ENCODE measurements at regions of chr5 and their contacts with region 1.

Region 1: GRCh38 chr5:59724482-59725391 is 168.8 kb downstream of the PDE4D start:
- DNase-seq: peak; percentile 59
- ATAC-seq: peak; percentile 64
- H3K4me3 ChIP-seq: no peak overlapping the region
- H3K4me3 Mint-ChIP-seq: no peak overlapping the region
- H3K27ac ChIP-seq: no peak overlapping the region
- H3K27ac Mint-ChIP-seq: no peak overlapping the region
- H3K4me1 ChIP-seq: no peaks in the 10 kb centered on the region
- H3K4me1 Mint-ChIP-seq: peaks cover 19% of the 10 kb centered on the region
- H3K27me3 ChIP-seq: no peaks in the 10 kb centered on the region
- H3K27me3 Mint-ChIP-seq: no peaks in the 10 kb centered on the region
- CTCF ChIP-seq: peak; percentile 79

Region 2: GRCh38 chr5:59390074-59390659 is 334.6 kb before region 1 on chr5:
- CTCF ChIA-PET with region 1: interaction called, 5 read pairs
- POLR2A ChIA-PET with region 1: no interaction called
- intact Hi-C with region 1: loop called (anchors 5 kb)
- DNase-seq: peak; percentile 53
- ATAC-seq: no peak
- H3K4me3 ChIP-seq: no peak overlapping the region
- H3K4me3 Mint-ChIP-seq: no peak overlapping the region
- H3K27ac ChIP-seq: no peak overlapping the region
- H3K27ac Mint-ChIP-seq: no peak overlapping the region
- H3K4me1 ChIP-seq: no peaks in the 10 kb centered on the region
- H3K4me1 Mint-ChIP-seq: peaks cover 21% of the 10 kb centered on the region
- H3K27me3 ChIP-seq: no peaks in the 10 kb centered on the region
- H3K27me3 Mint-ChIP-seq: no peaks in the 10 kb centered on the region
- CTCF ChIP-seq: peak; percentile 95

Region 3: DNA sequence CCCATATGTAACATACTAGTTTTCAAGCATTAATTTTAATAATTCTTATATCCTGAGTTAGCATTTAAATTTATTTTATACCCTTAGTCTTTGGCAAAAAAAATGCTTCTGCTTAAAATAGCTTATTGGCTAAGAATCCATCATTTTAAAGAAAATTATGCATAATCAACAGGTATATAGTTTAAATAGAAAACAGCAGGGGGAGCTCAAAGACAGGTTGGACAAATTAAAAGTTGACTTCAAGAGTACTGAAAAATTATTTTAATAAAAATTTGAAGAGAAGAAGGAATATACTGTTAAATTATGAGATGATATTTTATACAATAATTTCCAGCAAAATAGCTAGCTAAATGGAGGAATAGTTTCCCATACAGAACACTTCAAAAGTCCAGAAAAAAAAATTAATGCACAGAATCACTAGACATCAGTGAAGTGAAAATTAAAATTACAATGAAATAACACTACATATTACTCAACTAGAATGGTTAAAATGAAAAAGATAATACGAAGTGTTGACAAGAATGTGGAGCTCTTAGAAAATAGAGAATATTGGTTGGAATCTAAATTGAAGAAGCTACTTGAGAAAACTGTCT is 218.4 kb before region 1 on chr5:
- CTCF ChIA-PET with region 1: interaction called, 19 read pairs
- POLR2A ChIA-PET with region 1: no interaction called
- intact Hi-C with region 1: loop called (anchors 1 kb)
- DNase-seq: peak; percentile 57
- ATAC-seq: no peak
- H3K4me3 ChIP-seq: no peak overlapping the region
- H3K4me3 Mint-ChIP-seq: no peak overlapping the region
- H3K27ac ChIP-seq: no peak overlapping the region
- H3K27ac Mint-ChIP-seq: no peak overlapping the region
- H3K4me1 ChIP-seq: no peaks in the 10 kb centered on the region
- H3K4me1 Mint-ChIP-seq: no peaks in the 10 kb centered on the region
- H3K27me3 ChIP-seq: no peaks in the 10 kb centered on the region
- H3K27me3 Mint-ChIP-seq: no peaks in the 10 kb centered on the region
- CTCF ChIP-seq: peak; percentile 81

Region 4: GRCh38 chr5:59745422-59745863 is 20.7 kb after region 1 on chr5:
- CTCF ChIA-PET with region 1: no interaction called
- POLR2A ChIA-PET with region 1: no interaction called
- intact Hi-C with region 1: no loop called
- DNase-seq: no peak
- ATAC-seq: no peak
- H3K4me3 ChIP-seq: no peak overlapping the region
- H3K4me3 Mint-ChIP-seq: no peak overlapping the region
- H3K27ac ChIP-seq: no peak overlapping the region
- H3K27ac Mint-ChIP-seq: no peak overlapping the region
- H3K4me1 ChIP-seq: no peaks in the 10 kb centered on the region
- H3K4me1 Mint-ChIP-seq: peaks cover 29% of the 10 kb centered on the region
- H3K27me3 ChIP-seq: no peaks in the 10 kb centered on the region
- H3K27me3 Mint-ChIP-seq: no peaks in the 10 kb centered on the region
- CTCF ChIP-seq: no peak

Region 5: GRCh38 chr5:59759600-59760351 is 35.0 kb after region 1 on chr5:
- CTCF ChIA-PET with region 1: no interaction called
- POLR2A ChIA-PET with region 1: no interaction called
- intact Hi-C with region 1: loop called (anchors 5 kb)
- DNase-seq: no peak
- ATAC-seq: no peak
- H3K4me3 ChIP-seq: no peak overlapping the region
- H3K4me3 Mint-ChIP-seq: no peak overlapping the region
- H3K27ac ChIP-seq: no peak overlapping the region
- H3K27ac Mint-ChIP-seq: peak overlapping the region; percentile 10
- H3K4me1 ChIP-seq: peaks cover 12 to 13% of the 10 kb centered on the region in 2 donors
- H3K4me1 Mint-ChIP-seq: peaks cover 31% of the 10 kb centered on the region
- H3K27me3 ChIP-seq: no peaks in the 10 kb centered on the region
- H3K27me3 Mint-ChIP-seq: no peaks in the 10 kb centered on the region
- CTCF ChIP-seq: no peak

Region 6: GRCh38 chr5:59840200-59840601 is 115.5 kb after region 1 on chr5:
- CTCF ChIA-PET with region 1: no interaction called
- POLR2A ChIA-PET with region 1: no interaction called
- intact Hi-C with region 1: no loop called
- DNase-seq: no peak
- ATAC-seq: no peak
- H3K4me3 ChIP-seq: no peak overlapping the region
- H3K4me3 Mint-ChIP-seq: no peak overlapping the region
- H3K27ac ChIP-seq: no peak overlapping the region
- H3K27ac Mint-ChIP-seq: no peak overlapping the region
- H3K4me1 ChIP-seq: no peaks in the 10 kb centered on the region
- H3K4me1 Mint-ChIP-seq: no peaks in the 10 kb centered on the region
- H3K27me3 ChIP-seq: no peaks in the 10 kb centered on the region
- H3K27me3 Mint-ChIP-seq: peaks cover 10% of the 10 kb centered on the region
- CTCF ChIP-seq: no peak